HEK293 (cell line): ENCODE measurements at regions of chr6 and their contacts with region 1.

Region 1: DNA sequence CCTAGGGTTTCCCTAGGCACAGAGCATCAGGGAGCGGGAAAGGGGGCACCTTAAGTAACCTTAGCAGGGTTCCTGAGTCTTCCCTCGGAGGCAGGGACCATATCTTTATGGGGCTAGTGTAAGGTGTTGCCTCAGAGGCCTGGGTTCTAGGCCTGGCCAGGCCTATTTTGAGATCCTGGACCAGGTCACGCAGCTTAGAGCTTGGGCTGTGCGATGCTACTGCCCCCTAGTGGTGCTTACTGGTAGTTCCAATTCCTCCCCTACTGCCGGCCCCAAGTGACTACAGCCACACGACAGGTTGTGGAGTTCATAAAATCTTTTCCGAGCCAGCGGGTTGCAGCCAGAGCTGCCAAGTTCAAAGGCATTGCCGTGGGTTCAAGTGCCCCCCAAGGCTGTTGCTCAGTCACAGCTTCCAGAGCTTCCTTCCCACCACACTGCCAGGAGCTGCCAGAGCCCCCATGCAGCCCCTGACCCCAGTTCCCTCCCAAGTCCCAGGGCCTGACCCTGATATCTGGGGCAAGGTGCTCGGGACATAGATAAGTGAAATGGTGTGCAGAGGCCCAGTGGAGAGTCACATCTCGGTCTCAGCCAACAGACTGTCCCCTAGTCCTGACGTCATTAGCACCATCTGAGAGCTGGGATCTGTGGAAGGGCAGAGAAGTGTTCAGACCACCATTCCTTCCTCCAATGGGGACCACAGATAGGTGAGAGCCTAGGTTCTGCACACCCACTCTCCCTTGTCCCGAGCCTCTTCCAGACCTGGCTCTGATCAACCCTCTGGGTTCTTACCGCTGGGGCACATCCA is 3.3 kb downstream of the LRRC73 start:
- H3K4me3 ChIP-seq: no peak overlapping the region
- H3K27ac ChIP-seq: no peak overlapping the region
- H3K4me1 ChIP-seq: no peaks in the 10 kb centered on the region
- CTCF ChIP-seq: peak; percentile 88

Region 2: GRCh38 chr6:43228951-43229802 is 277.7 kb before region 1 on chr6 and contains the start of gene DNPH1:
- CTCF ChIA-PET with region 1: interaction called, 10 read pairs
- POLR2A ChIA-PET with region 1: no interaction called
- H3K4me3 ChIP-seq: peak within 1 kb of the TSS; percentile 87
- H3K27ac ChIP-seq: peak within 1 kb of the TSS; percentile 66
- H3K4me1 ChIP-seq: no peaks in the 10 kb centered on the region; the same call in 1 of the 2 replicates
- CTCF ChIP-seq: peak; percentile 75

Region 3: GRCh38 chr6:43334466-43335095 is 172.3 kb before region 1 on chr6:
- CTCF ChIA-PET with region 1: interaction called, 16 read pairs
- POLR2A ChIA-PET with region 1: no interaction called
- H3K4me3 ChIP-seq: no peak overlapping the region
- H3K27ac ChIP-seq: no peak overlapping the region
- H3K4me1 ChIP-seq: peaks cover 3% of the 10 kb centered on the region; the same call in 1 of the 2 replicates
- CTCF ChIP-seq: peak; percentile 39; the same call in 1 of the 2 replicates

Region 4: GRCh38 chr6:43454696-43455530 is 52.0 kb before region 1 on chr6:
- CTCF ChIA-PET with region 1: interaction called, 56 read pairs
- POLR2A ChIA-PET with region 1: interaction called, 5 read pairs
- H3K4me3 ChIP-seq: peak overlapping the region; percentile 65
- H3K27ac ChIP-seq: no peak overlapping the region; the same call in 1 of the 2 replicates
- H3K4me1 ChIP-seq: no peaks in the 10 kb centered on the region
- CTCF ChIP-seq: peak; percentile 97

Region 5: GRCh38 chr6:43477235-43478007 is 29.4 kb before region 1 on chr6 and contains the start of gene TJAP1:
- CTCF ChIA-PET with region 1: interaction called, 11 read pairs
- POLR2A ChIA-PET with region 1: interaction called, 5 read pairs
- H3K4me3 ChIP-seq: peak within 1 kb of the TSS; percentile 81
- H3K27ac ChIP-seq: peak within 1 kb of the TSS; percentile 50
- H3K4me1 ChIP-seq: peaks cover 10% of the 10 kb centered on the region
- CTCF ChIP-seq: no peak

Region 6: DNA sequence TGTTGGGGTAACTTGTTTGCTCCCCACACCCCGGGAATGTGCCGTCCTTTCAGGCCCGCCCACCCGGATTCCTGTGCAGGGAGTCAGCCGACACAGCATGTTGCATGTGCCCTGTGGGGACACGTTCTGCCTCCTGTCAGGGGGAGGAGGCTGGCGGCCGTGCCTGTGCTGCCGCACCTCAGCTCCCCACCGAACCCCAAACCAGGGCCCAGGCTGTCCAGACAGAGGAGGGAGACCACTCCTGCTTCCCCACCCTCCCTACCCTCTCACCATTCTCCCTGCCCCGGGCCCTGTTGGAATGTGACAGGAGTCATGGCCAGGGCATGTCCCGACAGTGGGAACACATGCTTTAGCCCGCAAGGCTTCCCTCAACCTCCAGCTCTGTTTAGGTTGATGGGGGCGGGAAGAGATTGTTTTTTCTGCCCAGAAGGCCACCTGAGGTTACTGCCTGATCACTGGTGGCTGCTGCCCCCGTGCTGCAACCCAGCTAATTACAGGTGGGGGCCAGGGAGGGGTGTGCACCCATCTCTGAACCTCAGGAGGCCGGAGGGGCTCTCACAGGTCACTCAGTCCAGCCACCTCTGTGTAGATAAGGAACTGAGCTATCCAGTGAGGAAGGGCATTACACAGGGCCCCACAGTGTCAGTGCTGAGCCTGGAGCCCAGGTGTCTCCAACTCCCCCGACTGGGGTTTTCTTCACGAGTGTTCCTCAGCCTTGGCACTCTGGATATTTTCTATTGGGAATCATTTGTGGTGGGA is 10.3 kb before region 1 on chr6:
- CTCF ChIA-PET with region 1: interaction called, 142 read pairs
- POLR2A ChIA-PET with region 1: interaction called, 6 read pairs
- H3K4me3 ChIP-seq: no peak overlapping the region
- H3K27ac ChIP-seq: no peak overlapping the region
- H3K4me1 ChIP-seq: peaks cover 7% of the 10 kb centered on the region
- CTCF ChIP-seq: 0 out of 2 replicates have a peak, but pooled peaks have one; percentile 22

Region 7: GRCh38 chr6:43644931-43645612 is 138.2 kb after region 1 on chr6 and contains the start of gene RSPH9:
- CTCF ChIA-PET with region 1: no interaction called
- POLR2A ChIA-PET with region 1: no interaction called
- H3K4me3 ChIP-seq: peak within 1 kb of the TSS; percentile 37
- H3K27ac ChIP-seq: peak within 1 kb of the TSS; percentile 46; the same call in 1 of the 2 replicates
- H3K4me1 ChIP-seq: peaks cover 7% of the 10 kb centered on the region
- CTCF ChIP-seq: no peak

Region 8: GRCh38 chr6:44022296-44022661 is 515.4 kb after region 1 on chr6:
- CTCF ChIA-PET with region 1: no interaction called
- POLR2A ChIA-PET with region 1: no interaction called
- H3K4me3 ChIP-seq: no peak overlapping the region
- H3K27ac ChIP-seq: no peak overlapping the region
- H3K4me1 ChIP-seq: no peaks in the 10 kb centered on the region
- CTCF ChIP-seq: no peak

Region 9: GRCh38 chr6:44353336-44353735 is 846.5 kb after region 1 on chr6:
- CTCF ChIA-PET with region 1: no interaction called
- POLR2A ChIA-PET with region 1: no interaction called
- H3K4me3 ChIP-seq: no peak overlapping the region
- H3K27ac ChIP-seq: no peak overlapping the region
- H3K4me1 ChIP-seq: peaks cover 3% of the 10 kb centered on the region; the same call in 1 of the 2 replicates
- CTCF ChIP-seq: no peak